HepG2 (cell line): ENCODE measurements at regions of chr4 and their contacts with region 1.

Region 1: DNA sequence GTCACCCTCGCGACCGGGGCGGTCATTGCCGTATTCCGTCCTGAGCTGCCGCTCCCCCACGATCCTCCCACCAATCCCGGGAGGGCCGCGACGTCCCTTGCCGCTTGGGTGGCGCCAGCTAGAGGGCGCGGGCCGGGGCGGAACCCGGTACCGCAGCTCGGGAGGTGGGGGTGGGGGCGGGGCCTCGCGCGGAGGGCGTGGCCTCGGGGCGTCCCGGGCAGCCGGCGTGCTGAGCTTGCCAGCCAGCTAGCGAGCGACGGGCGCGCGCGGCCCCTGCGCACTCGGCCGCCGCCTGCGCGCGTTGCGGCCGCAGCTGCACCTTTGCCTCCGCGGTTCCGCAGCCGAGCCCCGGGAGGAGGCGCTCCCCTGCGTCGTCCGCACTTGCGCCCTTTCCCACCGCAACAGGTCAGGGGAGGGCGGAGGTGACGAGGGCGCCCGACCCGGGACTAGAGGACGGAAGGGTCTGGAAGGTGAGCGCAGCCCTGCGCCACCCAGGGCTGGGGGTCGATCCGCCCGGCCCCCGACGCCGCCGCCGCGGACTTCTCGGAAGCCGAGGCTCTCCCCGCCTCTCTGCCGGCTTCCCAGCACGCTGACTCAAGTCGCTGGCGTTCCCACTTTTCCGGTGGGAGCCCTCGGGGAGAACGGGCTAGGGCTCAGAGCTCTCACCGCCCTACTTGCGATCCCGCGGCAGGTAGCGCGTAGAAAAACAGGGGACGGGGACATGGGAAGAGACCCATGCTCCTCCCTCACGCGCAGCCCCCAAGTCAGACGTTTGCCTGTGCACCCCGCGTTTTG is at the start of gene AFF1:
- DNase-seq: peak; percentile 86
- ATAC-seq: peak; percentile 88
- H3K4me3 ChIP-seq: peak within 1 kb of the TSS; percentile 80 to 96 (median 89)
- H3K27ac ChIP-seq: peak within 1 kb of the TSS; percentile 90
- H3K4me1 ChIP-seq: peaks cover 42% of the 10 kb centered on the region
- H3K27me3 ChIP-seq: no peaks in the 10 kb centered on the region; a peak in 1 of 5 replicates
- CTCF ChIP-seq: peak; percentile 69
- EP300 ChIP-seq: no peak
- POLR2A ChIP-seq: peak; percentile 87
- RAD21 ChIP-seq: peak; percentile 84
- total RNA-seq, gene AFF1: 15.9 and 19.6 TPM in 2 replicates

Region 2: DNA sequence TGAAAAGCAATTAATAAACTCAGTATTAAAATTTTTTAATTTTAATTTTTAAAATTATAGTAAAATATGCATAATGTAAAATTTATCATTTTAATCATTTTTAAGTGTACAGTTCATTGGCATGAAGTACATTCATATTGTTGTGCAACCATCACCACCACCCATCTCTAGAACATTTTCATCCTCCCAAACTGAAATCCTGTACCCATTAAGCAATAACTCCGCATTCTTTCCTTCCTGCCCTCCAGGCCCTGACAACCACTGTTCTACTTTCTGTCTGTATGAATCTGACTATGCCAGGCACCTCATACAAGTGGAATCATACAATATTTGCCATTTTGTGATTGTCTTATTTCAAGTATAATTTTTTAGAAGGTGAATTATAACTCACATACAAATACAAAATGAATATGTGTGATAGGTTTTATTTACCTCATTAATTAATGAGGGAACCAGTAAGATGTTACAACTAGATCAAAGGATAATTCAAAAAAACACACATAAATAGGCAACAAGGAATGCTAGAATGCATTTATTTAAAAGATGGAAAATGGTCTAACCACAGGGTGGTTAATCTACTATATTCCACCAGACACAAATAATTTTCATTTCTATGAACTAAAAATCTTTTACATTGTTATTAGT is 13.2 kb before region 1 on chr4:
- CTCF ChIA-PET with region 1: interaction called, 7 read pairs
- POLR2A ChIA-PET with region 1: interaction called, 21 read pairs
- in situ Hi-C with region 1: no loop called
- intact Hi-C with region 1: no loop called
- DNase-seq: no peak
- ATAC-seq: no peak
- H3K4me3 ChIP-seq: no peak overlapping the region
- H3K27ac ChIP-seq: no peak overlapping the region
- H3K4me1 ChIP-seq: peaks cover 14% of the 10 kb centered on the region
- H3K27me3 ChIP-seq: no peaks in the 10 kb centered on the region
- CTCF ChIP-seq: no peak
- EP300 ChIP-seq: no peak
- POLR2A ChIP-seq: no peak
- RAD21 ChIP-seq: no peak

Region 3: DNA sequence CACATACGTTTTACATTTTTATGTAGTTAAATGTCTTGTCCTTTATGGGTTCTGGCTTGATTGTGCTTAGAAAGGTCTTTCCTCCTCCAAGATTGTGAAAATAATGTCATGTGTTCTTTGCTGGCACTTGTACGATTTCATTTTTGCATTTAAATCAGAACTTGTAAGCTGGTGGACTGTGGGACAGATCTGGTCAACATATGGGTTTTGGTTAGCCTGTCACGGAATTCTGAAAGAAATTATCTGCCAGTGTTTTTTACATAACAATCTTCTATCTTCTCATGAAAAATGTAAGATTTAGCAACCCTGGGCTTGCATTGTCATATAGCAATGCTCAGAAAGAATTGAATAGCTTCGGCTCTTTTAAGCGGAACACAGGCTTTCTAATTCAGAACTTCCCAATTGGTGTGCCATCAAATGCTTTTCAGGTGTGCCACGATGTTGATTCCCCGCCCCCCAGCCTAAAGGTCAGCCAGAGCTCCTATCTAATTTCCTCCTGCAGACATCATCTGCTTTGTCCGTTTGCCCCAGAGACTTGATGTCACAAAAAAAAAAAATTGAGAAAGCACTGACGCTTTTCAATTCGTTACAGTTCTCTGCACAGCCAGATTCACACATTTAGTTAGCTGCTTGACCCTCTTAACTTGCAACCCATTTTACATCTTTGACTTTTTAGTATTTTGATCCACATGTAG is 16.0 kb after region 1 on chr4:
- CTCF ChIA-PET with region 1: no interaction called
- POLR2A ChIA-PET with region 1: interaction called, 14 read pairs
- in situ Hi-C with region 1: no loop called
- intact Hi-C with region 1: no loop called
- DNase-seq: no peak
- ATAC-seq: no peak
- H3K4me3 ChIP-seq: no peak overlapping the region
- H3K27ac ChIP-seq: no peak overlapping the region
- H3K4me1 ChIP-seq: peaks cover 21% of the 10 kb centered on the region
- H3K27me3 ChIP-seq: no peaks in the 10 kb centered on the region
- CTCF ChIP-seq: no peak
- EP300 ChIP-seq: no peak
- POLR2A ChIP-seq: no peak
- RAD21 ChIP-seq: no peak

Region 4: DNA sequence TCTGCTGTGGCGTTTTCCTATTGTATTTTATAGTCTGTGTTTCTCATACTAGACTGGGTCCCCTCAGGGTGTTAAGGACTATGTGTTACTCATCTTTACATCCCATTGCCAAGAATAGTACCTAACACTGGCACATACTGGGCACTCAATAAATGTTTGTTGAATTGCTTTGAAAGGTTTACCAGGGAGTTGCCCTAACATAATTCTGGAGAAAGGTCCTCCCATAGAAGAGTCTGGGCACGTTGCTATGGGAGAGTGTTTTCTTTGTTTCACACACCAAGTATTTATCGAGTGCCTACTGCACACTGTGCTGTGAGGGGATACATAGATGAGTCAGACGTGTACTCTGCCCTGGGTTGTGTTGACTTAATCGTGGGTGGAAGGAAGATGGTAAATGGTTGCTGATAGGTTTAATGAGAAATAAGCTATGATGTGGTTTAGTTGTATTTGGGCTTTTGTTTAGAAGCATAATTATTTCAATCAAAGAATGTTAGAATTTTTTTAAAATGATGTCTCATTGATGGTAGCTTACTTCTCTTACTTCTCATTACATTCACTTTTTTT is 42.7 kb after region 1 on chr4:
- CTCF ChIA-PET with region 1: no interaction called
- POLR2A ChIA-PET with region 1: interaction called, 22 read pairs
- in situ Hi-C with region 1: no loop called
- intact Hi-C with region 1: loop called (anchors 2 kb)
- DNase-seq: peak; percentile 96
- ATAC-seq: peak; percentile 97
- H3K4me3 ChIP-seq: peak overlapping the region in 1 of 3 experiments; percentile 28; a peak in 1 of 6 replicates
- H3K27ac ChIP-seq: peak overlapping the region; percentile 94
- H3K4me1 ChIP-seq: peaks cover 75% of the 10 kb centered on the region
- H3K27me3 ChIP-seq: no peaks in the 10 kb centered on the region
- CTCF ChIP-seq: no peak
- EP300 ChIP-seq: peak in 1 of 2 experiments; percentile 90; a peak in 2 of 4 replicates
- POLR2A ChIP-seq: no peak
- RAD21 ChIP-seq: no peak

Region 5: DNA sequence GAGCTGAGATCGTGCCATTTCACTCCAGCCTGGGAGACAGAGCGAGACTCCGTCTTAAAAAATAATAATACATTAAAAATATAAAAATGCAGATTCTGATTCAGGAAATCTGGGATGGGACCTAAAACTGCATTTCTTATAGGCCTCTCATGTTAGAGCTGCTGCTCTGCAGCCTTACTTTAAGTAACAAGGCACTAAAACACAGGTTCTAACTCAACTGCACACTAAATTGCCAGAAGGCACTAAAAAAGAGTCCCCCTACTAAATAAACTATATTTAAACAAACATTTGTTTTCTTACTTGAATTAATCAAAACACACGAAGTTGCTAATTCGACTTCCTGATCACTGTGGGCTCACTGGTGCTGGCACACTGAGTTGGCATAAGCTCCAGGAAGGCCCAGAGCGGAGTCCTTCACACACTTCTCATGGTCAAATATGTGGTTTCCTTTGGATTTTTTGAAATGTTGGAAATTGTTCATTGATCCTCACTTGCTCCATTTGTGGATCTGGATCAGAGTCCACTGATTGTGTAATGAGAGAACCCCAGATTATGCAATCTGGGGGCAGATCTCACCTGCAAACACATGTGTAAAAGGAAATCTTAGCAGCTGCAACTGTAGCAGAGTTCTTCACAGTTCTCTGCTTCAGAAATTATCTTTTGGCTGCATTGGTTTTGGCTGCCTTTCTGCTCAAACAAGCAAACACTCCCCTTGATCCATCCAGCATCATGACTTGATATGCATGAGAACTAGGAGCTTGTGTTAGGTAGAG is 59.1 kb after region 1 on chr4:
- CTCF ChIA-PET with region 1: no interaction called
- POLR2A ChIA-PET with region 1: interaction called, 15 read pairs
- in situ Hi-C with region 1: no loop called
- intact Hi-C with region 1: no loop called
- DNase-seq: peak; percentile 74
- ATAC-seq: peak; percentile 93
- H3K4me3 ChIP-seq: no peak overlapping the region; a peak in 1 of 6 replicates
- H3K27ac ChIP-seq: peak overlapping the region; percentile 76
- H3K4me1 ChIP-seq: peaks cover 37% of the 10 kb centered on the region
- H3K27me3 ChIP-seq: no peaks in the 10 kb centered on the region
- CTCF ChIP-seq: no peak
- EP300 ChIP-seq: peak; percentile 83 to 85
- POLR2A ChIP-seq: no peak
- RAD21 ChIP-seq: 0 out of 2 replicates have a peak, but pooled peaks have one; percentile 12

Region 6: GRCh38 chr4:87093443-87094123 is 158.6 kb after region 1 on chr4:
- CTCF ChIA-PET with region 1: no interaction called
- POLR2A ChIA-PET with region 1: interaction called, 4 read pairs
- in situ Hi-C with region 1: no loop called
- intact Hi-C with region 1: loop called (anchors 5 kb)
- DNase-seq: peak; percentile 56
- ATAC-seq: peak; percentile 83
- H3K4me3 ChIP-seq: no peak overlapping the region
- H3K27ac ChIP-seq: no peak overlapping the region
- H3K4me1 ChIP-seq: peaks cover 42% of the 10 kb centered on the region
- H3K27me3 ChIP-seq: no peaks in the 10 kb centered on the region
- CTCF ChIP-seq: peak; percentile 79
- EP300 ChIP-seq: no peak
- POLR2A ChIP-seq: no peak
- RAD21 ChIP-seq: peak; percentile 56; the same call in 1 of the 2 replicates

Region 7: GRCh38 chr4:87108142-87108546 is 173.2 kb after region 1 on chr4:
- CTCF ChIA-PET with region 1: no interaction called
- POLR2A ChIA-PET with region 1: no interaction called
- in situ Hi-C with region 1: no loop called
- intact Hi-C with region 1: loop called (anchors 5 kb)
- DNase-seq: no peak
- ATAC-seq: no peak
- H3K4me3 ChIP-seq: no peak overlapping the region
- H3K27ac ChIP-seq: no peak overlapping the region
- H3K4me1 ChIP-seq: peaks cover 37% of the 10 kb centered on the region
- H3K27me3 ChIP-seq: no peaks in the 10 kb centered on the region
- CTCF ChIP-seq: no peak
- EP300 ChIP-seq: no peak
- POLR2A ChIP-seq: no peak
- RAD21 ChIP-seq: no peak